Dendritic cell treated with granulocyte-macrophage colony-stimulating factor and Interleukin-4, amounts not matched to agents 40 ng/mL and 50 ng/mL, for 4 days (primary cell): ENCODE measurements at regions of chr5 and their contacts with region 1.

Region 1: DNA sequence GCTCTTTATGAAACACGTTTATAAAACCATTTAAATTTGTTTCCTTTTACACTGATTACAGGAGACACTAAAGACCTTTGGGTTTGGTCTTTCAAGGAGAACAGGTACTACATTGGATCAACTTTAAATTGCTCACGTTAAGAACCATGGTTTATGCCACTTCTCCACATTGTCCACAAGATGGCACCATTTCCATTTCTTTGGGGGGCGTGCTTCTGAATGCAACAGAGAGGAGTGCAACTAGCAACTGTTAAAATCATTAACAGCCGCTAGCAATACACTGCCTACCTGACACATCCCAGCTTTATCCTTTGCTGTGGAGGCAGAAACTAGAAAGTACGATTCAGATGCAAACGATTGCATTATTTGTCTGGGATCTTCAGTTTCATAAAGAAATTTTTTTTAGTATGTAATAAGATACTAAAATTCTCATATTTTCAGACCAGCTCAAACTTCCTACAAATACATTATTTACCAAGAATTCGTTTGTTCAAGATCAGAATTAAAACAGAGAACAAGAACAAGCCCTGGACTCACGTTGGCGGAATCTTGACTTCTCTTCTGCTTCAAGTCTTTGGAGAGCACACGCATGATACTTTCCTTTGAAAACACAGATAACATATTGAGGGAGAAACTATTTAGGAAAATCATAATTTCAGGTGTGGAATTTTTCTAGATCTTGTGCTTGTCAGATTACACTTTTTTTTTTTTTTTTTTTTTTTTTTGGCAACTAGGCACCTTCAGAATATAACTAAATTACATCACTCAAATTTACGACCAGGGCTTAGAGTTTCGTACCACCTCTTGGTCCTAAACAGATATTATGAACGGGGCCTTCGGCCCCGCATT is 702 bp downstream of the CDC20B start:
- H3K4me3 Mint-ChIP-seq: peak overlapping the region; percentile 83
- H3K27ac Mint-ChIP-seq: peak overlapping the region; percentile 77
- H3K4me1 Mint-ChIP-seq: peaks cover 31% of the 10 kb centered on the region
- H3K27me3 Mint-ChIP-seq: peaks cover 65% of the 10 kb centered on the region

Region 2: DNA sequence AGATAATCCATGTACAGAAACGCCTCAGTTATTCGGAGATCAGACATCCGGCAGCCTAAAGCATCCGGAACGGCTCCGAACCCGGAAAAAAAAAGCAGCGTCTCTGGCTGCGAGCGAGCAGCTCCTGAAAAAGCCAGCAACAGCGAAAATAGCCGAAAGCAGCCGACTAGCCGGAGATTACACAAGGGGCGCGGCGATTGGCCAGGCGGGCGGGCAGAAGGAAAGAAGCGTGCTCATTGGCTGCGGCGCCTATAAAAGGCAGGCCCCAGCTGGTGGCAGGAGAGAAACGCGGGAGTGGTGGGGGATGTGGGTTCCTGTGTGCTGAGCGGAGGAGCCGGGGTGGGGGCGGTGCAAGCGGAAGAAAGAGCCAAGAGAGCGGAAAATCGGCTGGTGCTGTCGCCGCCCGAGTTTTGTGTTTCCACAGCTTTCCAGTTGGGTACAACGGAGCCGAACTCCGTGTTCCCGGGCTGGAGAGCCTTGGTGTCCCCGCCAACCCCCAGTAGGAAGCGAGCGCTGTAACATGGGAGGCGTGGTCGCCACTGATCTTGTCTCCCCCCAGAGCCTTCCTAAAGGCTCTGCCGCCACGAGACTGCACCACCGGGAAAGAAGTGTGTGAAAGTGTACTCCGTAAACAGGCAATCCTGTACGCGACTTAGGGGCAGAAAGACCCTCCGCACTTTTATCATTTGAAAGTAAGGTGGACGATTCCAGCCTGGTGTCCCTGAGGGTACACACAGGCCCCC is 861.7 kb before region 1 on chr5 and contains the start of gene ARL15:
- intact Hi-C with region 1: loop called (anchors 5 kb)
- H3K4me3 Mint-ChIP-seq: peak within 1 kb of the TSS; percentile 87
- H3K27ac Mint-ChIP-seq: peak within 1 kb of the TSS; percentile 89
- H3K4me1 Mint-ChIP-seq: peaks cover 29% of the 10 kb centered on the region
- H3K27me3 Mint-ChIP-seq: peaks cover 8% of the 10 kb centered on the region

Region 3: DNA sequence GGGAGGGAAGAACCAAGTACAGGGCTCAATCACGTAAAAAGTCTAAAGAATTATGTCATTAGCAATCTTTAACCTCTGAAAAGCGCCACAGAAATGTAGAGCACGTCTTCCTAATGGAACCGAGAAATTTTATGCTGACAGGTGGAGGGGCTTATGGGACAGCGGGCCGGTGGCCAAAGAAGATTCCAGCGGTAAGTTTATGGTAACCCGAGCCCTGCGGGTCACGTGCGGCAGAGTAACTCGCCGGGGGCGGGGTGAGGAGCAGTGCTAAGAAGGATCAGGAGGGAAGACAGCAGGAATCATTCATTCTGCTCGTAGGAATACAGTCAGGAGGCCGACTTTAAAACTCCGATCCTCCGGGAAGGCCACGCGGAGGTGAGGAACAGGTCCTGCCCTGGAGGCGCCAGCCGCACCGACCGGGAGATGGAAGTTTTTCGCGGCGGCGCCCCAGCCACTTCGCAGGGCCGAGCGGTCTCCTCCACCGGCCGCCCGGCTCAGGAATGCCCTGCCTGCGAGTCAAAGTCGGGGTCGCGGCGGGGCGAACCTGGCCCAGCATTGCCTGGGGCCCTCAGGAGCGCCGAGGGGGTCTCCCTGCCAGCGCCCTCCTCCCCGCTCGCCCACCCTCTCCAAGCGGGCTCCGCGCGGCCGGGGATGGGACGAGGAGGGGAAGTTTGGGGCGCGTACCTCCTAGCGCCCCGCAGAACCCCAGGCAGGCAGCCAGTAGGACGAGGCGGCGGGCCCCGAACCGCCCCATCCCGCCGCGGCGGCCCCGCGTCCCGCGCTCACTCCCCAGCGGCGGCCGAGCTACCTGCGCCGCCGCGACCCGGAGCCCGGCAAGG is 288.7 kb before region 1 on chr5:
- intact Hi-C with region 1: no loop called
- H3K4me3 Mint-ChIP-seq: peak overlapping the region; percentile 74
- H3K27ac Mint-ChIP-seq: peak overlapping the region; percentile 6
- H3K4me1 Mint-ChIP-seq: peaks cover 10% of the 10 kb centered on the region
- H3K27me3 Mint-ChIP-seq: peaks cover 46% of the 10 kb centered on the region

Region 4: DNA sequence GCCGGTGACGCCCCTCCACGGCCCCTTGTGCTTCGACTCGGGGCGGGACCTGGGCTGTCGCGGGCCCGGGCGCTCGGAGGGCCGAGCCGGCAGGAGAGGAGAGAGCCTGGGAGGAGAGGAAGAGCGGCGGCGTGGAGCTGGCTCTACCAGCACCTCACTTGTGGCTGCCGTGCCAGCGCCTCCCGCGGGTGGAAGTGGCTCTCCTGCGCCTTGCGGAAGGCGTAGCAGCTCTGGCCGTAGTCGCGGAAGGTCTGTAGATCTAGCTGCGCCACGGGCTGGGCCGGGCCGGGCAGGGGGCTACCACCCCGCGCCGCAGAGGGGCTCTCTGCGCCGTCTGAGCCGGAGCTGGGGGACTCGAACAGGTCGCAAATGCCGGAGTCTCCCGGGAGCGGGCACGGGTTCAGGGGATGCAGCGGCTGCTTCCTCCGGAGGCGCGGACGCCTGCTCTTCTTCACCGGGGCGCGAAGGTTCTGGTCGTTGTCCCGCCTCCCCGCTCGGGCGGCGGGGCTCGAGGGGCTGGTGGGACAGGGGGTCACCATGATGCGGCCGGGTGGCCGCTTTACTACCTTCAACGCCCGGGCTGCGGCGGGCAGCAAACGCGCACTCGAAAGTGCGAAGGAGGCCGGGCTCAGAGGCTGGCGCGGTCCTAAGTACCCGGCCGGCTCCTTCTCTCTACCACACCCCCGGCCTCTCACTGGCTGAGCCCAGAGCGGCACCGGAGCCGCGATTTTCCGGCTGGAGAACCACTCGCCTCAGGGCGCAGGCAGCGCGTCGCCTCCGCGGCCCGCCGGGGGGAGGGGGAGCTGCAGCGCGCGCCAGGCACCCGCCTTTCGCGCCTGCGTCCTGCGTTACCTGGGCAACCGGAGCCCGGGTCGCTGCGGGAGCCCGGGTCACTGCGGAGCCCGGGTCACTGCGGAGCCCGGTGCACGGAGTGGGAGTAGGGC is 61.0 kb after region 1 on chr5 and contains the start of gene CCNO:
- intact Hi-C with region 1: loop called (anchors 5 kb)
- H3K4me3 Mint-ChIP-seq: peak within 1 kb of the TSS; percentile 86
- H3K27ac Mint-ChIP-seq: no peak within 1 kb of the TSS
- H3K4me1 Mint-ChIP-seq: peaks cover 22% of the 10 kb centered on the region
- H3K27me3 Mint-ChIP-seq: peaks cover 92% of the 10 kb centered on the region

Region 5: DNA sequence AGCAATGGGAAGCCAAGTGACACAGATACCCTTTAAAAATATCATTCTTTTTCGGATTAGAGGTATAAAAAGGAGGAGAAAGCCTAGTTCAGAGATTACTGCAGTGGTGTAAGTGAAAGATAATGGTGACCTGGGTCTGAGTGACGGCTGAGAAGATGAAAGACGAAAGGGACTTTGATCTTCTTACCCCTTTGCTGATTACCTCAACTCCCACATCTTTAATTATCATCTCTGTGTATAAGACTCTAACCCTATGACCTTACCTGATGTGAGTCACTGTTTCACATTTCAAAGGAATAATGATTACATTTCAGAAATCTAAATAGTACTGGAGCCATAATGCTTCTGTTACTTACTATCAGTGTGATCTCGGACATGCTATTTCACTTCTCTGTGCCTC is 82.5 kb after region 1 on chr5:
- intact Hi-C with region 1: loop called (anchors 5 kb)
- H3K4me3 Mint-ChIP-seq: no peak overlapping the region
- H3K27ac Mint-ChIP-seq: no peak overlapping the region
- H3K4me1 Mint-ChIP-seq: no peaks in the 10 kb centered on the region
- H3K27me3 Mint-ChIP-seq: peaks cover 4% of the 10 kb centered on the region

Region 6: DNA sequence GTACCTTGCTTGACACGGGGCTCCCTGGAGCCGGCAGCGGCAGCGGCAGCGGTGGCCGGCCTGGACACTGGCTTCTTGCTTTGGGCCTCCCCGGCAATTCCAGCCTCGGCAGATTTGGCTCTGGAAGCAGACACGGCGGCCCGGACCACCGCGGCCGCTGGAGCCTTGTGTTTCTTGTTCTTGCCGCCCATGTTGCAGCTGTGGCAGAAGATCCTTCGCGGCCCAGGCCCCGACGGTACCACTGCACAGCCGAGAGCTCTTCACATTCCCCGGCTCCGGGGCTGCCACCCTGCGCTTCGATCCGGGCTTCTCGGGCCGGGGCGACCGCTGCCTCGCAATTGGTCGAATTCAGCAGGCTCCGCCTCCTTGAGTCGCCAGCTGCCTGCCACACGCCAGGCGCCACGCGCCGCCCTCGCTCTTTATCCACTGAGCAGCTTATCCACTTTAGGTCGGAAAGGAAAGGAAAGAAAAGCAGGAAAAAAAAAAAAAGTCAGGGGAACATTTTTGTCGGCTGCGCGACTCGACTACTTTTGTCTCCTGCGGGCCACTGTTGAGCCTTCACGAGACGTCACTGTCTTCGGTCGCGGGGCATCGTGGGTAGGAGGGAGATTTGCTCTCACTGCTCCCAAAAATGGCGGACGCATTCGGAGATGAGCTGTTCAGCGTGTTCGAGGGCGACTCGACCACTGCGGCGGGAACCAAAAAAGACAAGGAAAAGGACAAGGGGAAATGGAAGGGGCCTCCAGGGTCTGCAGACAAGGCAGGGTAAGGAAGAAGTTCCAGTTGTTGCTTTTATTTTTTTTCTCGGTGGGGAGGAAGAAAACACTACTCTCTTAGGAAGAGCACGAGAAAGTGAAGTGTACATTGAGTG is 135.3 kb after region 1 on chr5 and contains the starts of genes DHX29 and MTREX:
- intact Hi-C with region 1: loop called (anchors 5 kb)
- H3K4me3 Mint-ChIP-seq: no peak within 1 kb of the TSS
- H3K27ac Mint-ChIP-seq: no peak within 1 kb of the TSS
- H3K4me1 Mint-ChIP-seq: peaks cover 28% of the 10 kb centered on the region
- H3K27me3 Mint-ChIP-seq: no peaks in the 10 kb centered on the region

Region 7: GRCh38 chr5:55691265-55692105 is 519.2 kb after region 1 on chr5:
- intact Hi-C with region 1: loop called (anchors 2 kb)
- H3K4me3 Mint-ChIP-seq: no peak overlapping the region
- H3K27ac Mint-ChIP-seq: peak overlapping the region; percentile 34
- H3K4me1 Mint-ChIP-seq: peaks cover 24% of the 10 kb centered on the region
- H3K27me3 Mint-ChIP-seq: no peaks in the 10 kb centered on the region